A673 (cell line): ENCODE measurements at regions of chr19 and their contacts with region 1.

Region 1: GRCh38 chr19:6372594-6373095 is at the start of gene ALKBH7:
- DNase-seq: peak; percentile 100
- H3K4me3 ChIP-seq: peak within 1 kb of the TSS; percentile 91
- H3K27ac ChIP-seq: peak within 1 kb of the TSS; percentile 99
- H3K4me1 ChIP-seq: peaks cover 12% of the 10 kb centered on the region
- H3K27me3 ChIP-seq: no peaks in the 10 kb centered on the region
- CTCF ChIP-seq: no peak
- total RNA-seq, gene ALKBH7: 30.6 and 37.1 TPM in 2 replicates

Region 2: GRCh38 chr19:6362027-6362350 is 10.7 kb before region 1 on chr19:
- CTCF ChIA-PET with region 1: interaction called, 3 read pairs
- POLR2A ChIA-PET with region 1: interaction called, 11 read pairs
- intact Hi-C with region 1: no loop called
- DNase-seq: no peak
- H3K4me3 ChIP-seq: peak overlapping the region; percentile 89
- H3K27ac ChIP-seq: peak overlapping the region; percentile 92
- H3K4me1 ChIP-seq: no peaks in the 10 kb centered on the region
- H3K27me3 ChIP-seq: no peaks in the 10 kb centered on the region
- CTCF ChIP-seq: no peak

Region 3: GRCh38 chr19:6424939-6425731 is 52.5 kb after region 1 on chr19:
- CTCF ChIA-PET with region 1: no interaction called
- POLR2A ChIA-PET with region 1: no interaction called
- intact Hi-C with region 1: loop called (anchors 5 kb)
- DNase-seq: peak; percentile 100
- H3K4me3 ChIP-seq: peak overlapping the region; percentile 99
- H3K27ac ChIP-seq: peak overlapping the region; percentile 86
- H3K4me1 ChIP-seq: peaks cover 14% of the 10 kb centered on the region
- H3K27me3 ChIP-seq: no peaks in the 10 kb centered on the region
- CTCF ChIP-seq: no peak